Gastrocnemius medialis (tissue), 4 donors: ENCODE measurements at regions of chr1 and their contacts with region 1.

Region 1: DNA sequence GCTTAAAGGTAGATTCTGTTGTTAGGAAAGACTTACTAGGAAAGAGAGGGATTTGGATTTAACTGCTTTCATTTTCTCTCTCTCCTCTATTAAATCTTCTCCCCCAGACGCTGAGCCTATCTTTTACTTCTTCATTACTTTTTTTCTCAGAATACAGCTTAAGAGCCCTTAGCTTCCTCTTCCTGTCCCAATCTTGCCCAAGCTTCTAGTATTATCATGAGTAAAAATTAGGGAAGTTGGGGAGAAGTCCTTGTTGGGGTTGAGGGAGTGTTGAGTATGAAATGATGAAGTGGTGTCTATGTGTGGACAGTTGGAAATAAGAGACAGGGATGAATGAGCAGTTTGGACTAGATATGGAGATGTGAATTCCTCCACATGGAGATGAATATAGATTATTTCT is 35.0 kb downstream of the ACP6 start:
- DNase-seq: no peak
- ATAC-seq: no peak
- H3K4me3 ChIP-seq: no peak overlapping the region
- H3K27ac ChIP-seq: no peak overlapping the region
- H3K4me1 ChIP-seq: peaks cover 20 to 22% of the 10 kb centered on the region in 2 donors
- H3K27me3 ChIP-seq: no peaks in the 10 kb centered on the region
- CTCF ChIP-seq: no peak
- POLR2A ChIP-seq: no peak

Region 2: DNA sequence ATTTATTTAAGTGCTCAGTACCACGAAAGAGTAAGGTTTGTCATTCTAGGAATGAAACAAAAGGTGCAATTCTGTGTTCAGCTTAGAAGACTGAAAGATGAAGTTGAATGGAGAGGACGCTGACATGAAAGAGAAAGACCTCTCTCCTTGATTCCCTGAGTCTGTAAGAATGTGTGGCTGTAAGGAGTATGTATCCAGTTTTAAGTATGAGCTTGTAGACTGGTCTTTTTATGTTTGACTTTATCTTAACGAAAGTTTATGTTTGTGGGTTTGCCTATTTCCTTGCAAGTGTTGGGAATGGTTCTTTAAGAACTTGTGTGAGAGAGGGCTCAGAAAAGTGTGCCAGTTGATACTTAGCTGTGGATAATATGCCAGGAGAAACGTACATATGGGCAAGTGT is 391.5 kb before region 1 on chr1:
- in situ Hi-C with region 1: no loop called
- intact Hi-C with region 1: no loop called
- DNase-seq: no peak
- ATAC-seq: no peak
- H3K4me3 ChIP-seq: peak overlapping the region; percentile 81 to 89 (median 84)
- H3K27ac ChIP-seq: peak overlapping the region; percentile 93 to 97 (median 95)
- H3K4me1 ChIP-seq: peaks cover 19 to 25% of the 10 kb centered on the region in 2 donors
- H3K27me3 ChIP-seq: no peaks in the 10 kb centered on the region
- CTCF ChIP-seq: no peak
- POLR2A ChIP-seq: no peak

Region 3: GRCh38 chr1:147515046-147515869 is 120.1 kb before region 1 on chr1:
- in situ Hi-C with region 1: loop called in 1 of 4 experiments (anchors 5 kb)
- intact Hi-C with region 1: loop called (anchors 1 kb)
- DNase-seq: peak; percentile 11 to 21
- ATAC-seq: peak; percentile 99 to 100
- H3K4me3 ChIP-seq: no peak overlapping the region
- H3K27ac ChIP-seq: peak overlapping the region in 3 of 4 donors; percentile 16 to 38 (median 32)
- H3K4me1 ChIP-seq: peaks cover 6 to 16% of the 10 kb centered on the region in 2 donors
- H3K27me3 ChIP-seq: no peaks in the 10 kb centered on the region
- CTCF ChIP-seq: peak in 4 of 5 experiments; percentile 29 to 48 (median 40)
- POLR2A ChIP-seq: no peak

Region 4: DNA sequence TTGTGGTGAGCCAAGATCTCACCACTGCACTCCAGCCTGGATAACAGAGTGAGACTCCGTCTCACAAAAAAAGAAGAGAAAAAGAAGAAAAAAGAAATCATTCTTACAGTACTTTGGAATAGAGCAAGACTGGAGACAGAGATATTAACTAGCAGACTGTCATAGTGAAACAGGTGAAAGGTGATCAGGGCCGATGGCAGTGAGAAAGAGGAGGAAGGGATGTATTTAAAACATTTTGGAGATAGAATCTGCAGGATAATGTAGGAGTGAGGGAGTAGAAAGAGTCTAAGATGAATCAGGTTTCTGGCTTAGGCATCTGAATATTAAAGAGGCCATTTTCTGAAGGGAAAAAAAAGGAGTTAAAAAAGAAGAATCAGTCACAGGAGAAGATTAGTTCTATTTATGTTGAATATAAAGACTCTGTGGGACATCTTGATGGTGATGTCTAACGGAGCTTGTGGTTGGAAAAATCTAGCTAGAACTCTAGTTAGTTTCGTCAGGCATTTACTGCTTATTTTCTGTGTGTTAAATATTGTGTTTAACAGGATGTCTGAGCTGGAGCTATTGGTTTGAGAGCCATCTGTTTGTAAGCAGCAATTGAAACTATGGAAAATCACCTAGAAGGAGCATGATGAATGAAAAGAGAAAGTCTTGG is 65.6 kb before region 1 on chr1:
- in situ Hi-C with region 1: no loop called
- intact Hi-C with region 1: no loop called
- DNase-seq: no peak
- ATAC-seq: no peak
- H3K4me3 ChIP-seq: no peak overlapping the region
- H3K27ac ChIP-seq: no peak overlapping the region
- H3K4me1 ChIP-seq: peaks cover 0 to 8% of the 10 kb centered on the region in 2 donors
- H3K27me3 ChIP-seq: no peaks in the 10 kb centered on the region
- CTCF ChIP-seq: no peak
- POLR2A ChIP-seq: no peak

Region 5: DNA sequence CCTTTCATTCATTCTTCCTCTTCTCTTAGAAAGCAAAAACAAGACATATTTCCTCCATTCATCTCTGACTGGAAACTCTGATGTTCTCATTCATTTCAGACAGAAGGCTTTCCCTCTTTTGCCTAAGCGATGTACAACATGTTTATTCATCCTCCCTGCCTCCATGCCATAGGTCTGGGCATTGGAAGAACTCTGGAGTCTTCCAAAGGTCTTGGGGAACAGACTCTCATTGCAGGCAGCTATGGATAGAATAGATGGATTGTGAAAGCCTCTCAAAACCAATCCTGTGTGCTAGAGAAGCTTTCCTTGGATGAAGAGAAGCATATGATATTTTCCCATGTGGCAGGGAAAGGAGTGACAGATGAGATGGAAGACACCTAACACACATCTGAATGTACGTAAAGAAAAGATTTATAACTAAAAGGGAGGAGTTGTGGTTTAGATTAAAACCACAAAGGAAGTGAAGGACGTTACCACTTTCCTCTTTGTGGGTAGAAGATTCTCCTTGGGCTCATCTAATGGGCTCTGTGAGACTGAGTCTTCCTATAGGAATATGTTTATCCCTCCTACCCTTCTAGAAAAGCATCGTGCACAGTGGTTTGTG is 55.3 kb before region 1 on chr1:
- in situ Hi-C with region 1: no loop called
- intact Hi-C with region 1: no loop called
- DNase-seq: no peak
- ATAC-seq: no peak
- H3K4me3 ChIP-seq: no peak overlapping the region
- H3K27ac ChIP-seq: no peak overlapping the region
- H3K4me1 ChIP-seq: peaks cover 32 to 54% of the 10 kb centered on the region in 2 donors
- H3K27me3 ChIP-seq: no peaks in the 10 kb centered on the region
- CTCF ChIP-seq: no peak
- POLR2A ChIP-seq: no peak